PC-3 (cell line): ENCODE measurements at regions of chr2 and their contacts with region 1.

Region 1: DNA sequence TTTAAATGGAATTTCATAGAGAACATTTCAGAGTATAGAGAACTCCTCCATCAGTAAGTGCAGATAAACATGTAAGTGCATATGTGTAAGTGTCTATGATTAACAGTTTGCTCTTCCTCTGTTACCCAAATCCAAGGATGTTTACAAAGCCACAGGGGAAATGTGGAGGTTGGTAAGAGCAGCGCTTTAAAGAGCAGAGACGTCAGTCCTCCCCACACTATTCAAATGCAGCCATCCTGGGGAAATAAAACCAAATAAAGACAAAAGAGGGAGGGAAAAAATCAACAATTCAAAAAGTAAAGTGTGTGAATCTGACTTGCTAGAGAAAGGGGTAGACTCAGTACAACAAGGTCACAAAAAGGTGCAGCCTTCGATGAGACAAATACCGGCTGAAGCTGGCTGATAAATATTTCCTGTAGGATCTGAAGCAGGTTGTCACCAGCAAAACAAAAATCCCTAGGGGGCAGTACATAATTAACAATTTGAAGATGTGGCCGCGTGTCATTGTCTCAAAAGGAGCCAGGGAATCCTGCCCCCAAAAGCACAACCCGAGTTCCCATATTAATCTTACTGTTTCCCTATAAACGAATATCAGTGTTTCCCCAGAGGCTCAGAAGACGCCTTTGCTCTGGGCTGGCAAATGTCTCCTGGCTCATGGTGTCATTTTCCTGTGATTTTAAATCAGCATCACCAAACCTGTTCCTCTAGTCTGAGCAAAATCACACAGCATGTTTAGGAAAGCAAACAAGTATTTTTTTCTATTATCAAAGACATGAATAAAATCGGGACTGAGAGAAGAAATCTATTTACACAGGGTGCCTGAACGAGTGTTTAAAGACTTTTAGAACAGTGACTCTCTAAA is 216.6 kb downstream of the CDCA7 start:
- DNase-seq: peak; percentile 77
- ATAC-seq: peak; percentile 72
- H3K4me3 ChIP-seq: peak overlapping the region; percentile 58
- H3K27ac ChIP-seq: peak overlapping the region; percentile 71
- H3K4me1 ChIP-seq: peaks cover 40% of the 10 kb centered on the region
- H3K27me3 ChIP-seq: no peaks in the 10 kb centered on the region
- CTCF ChIP-seq: peak; percentile 70

Region 2: GRCh38 chr2:173448938-173449471 is 122.2 kb before region 1 on chr2:
- CTCF ChIA-PET with region 1: no interaction called
- POLR2A ChIA-PET with region 1: no interaction called
- intact Hi-C with region 1: loop called (anchors 2 kb)
- DNase-seq: peak; percentile 95
- ATAC-seq: peak; percentile 96
- H3K4me3 ChIP-seq: peak overlapping the region; percentile 60
- H3K27ac ChIP-seq: peak overlapping the region; percentile 35; the same call in 1 of the 2 replicates
- H3K4me1 ChIP-seq: peaks cover 11% of the 10 kb centered on the region; the same call in 1 of the 2 replicates
- H3K27me3 ChIP-seq: no peaks in the 10 kb centered on the region
- CTCF ChIP-seq: peak; percentile 86

Region 3: DNA sequence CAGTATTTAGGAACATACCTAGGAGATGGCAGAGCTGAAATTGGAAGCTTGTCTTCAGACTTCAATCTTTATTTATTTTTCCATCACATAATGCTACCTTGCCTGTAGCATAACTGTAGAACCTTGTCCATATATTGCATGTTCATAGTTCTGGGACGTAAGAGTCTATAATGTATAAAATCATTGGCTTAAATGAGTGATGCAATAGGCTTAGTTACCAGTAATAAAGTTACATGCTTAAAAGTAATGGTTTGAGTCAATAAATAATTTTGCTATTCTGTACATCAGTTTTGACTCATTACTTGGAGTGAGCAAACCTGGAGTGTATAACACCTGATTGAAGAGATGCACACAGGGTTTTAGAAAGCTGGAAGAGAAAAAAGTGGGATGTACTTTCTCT is 12.7 kb after region 1 on chr2:
- CTCF ChIA-PET with region 1: no interaction called
- POLR2A ChIA-PET with region 1: no interaction called
- intact Hi-C with region 1: no loop called
- DNase-seq: no peak
- ATAC-seq: no peak
- H3K4me3 ChIP-seq: no peak overlapping the region
- H3K27ac ChIP-seq: no peak overlapping the region
- H3K4me1 ChIP-seq: peaks cover 17% of the 10 kb centered on the region
- H3K27me3 ChIP-seq: no peaks in the 10 kb centered on the region
- CTCF ChIP-seq: no peak

Region 4: GRCh38 chr2:173652767-173653431 is 81.6 kb after region 1 on chr2:
- CTCF ChIA-PET with region 1: no interaction called
- POLR2A ChIA-PET with region 1: no interaction called
- intact Hi-C with region 1: loop called (anchors 1 kb)
- DNase-seq: peak; percentile 99
- ATAC-seq: peak; percentile 99
- H3K4me3 ChIP-seq: peak overlapping the region; percentile 50
- H3K27ac ChIP-seq: peak overlapping the region; percentile 97
- H3K4me1 ChIP-seq: peaks cover 27% of the 10 kb centered on the region
- H3K27me3 ChIP-seq: no peaks in the 10 kb centered on the region
- CTCF ChIP-seq: no peak

Region 5: DNA sequence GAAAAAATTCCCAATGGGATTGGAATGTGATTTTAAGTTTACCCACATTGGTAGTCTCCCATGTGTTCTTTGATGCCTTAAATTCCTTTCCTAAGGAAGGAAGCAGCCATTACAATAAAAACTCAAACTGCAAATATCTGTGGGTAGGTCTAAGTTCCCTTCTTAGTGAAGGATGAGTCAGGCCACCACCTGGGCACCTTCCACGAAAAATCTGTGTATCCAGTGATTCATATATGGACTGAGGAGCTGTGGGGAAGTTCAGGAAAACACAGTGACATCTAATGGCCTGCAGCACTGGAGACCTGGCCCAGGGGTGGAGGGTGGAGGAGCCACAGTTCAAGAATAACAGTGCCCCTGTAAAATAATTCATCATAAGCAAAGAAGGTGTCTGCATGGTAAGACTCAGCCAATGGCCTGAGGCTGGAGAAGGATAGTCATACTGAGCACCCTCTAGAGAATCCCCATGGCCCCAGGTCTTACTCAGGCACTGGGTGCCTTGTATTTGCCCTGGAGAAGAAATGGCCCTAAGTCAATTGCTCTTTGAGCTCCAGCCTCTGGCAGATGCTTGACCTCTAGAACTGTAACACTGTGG is 145.3 kb after region 1 on chr2:
- CTCF ChIA-PET with region 1: no interaction called
- POLR2A ChIA-PET with region 1: no interaction called
- intact Hi-C with region 1: loop called (anchors 1 kb)
- DNase-seq: peak; percentile 97
- ATAC-seq: peak; percentile 81
- H3K4me3 ChIP-seq: 0 out of 2 replicates have a peak overlapping the region, but pooled peaks have one; percentile 8
- H3K27ac ChIP-seq: peak overlapping the region; percentile 96
- H3K4me1 ChIP-seq: peaks cover 43% of the 10 kb centered on the region
- H3K27me3 ChIP-seq: no peaks in the 10 kb centered on the region
- CTCF ChIP-seq: peak; percentile 42

Region 6: GRCh38 chr2:173854840-173855239 is 283.6 kb after region 1 on chr2:
- CTCF ChIA-PET with region 1: no interaction called
- POLR2A ChIA-PET with region 1: no interaction called
- intact Hi-C with region 1: loop called (anchors 10 kb)
- DNase-seq: peak; percentile 91
- ATAC-seq: peak; percentile 86
- H3K4me3 ChIP-seq: peak overlapping the region; percentile 19; the same call in 1 of the 2 replicates
- H3K27ac ChIP-seq: peak overlapping the region; percentile 38
- H3K4me1 ChIP-seq: peaks cover 33% of the 10 kb centered on the region
- H3K27me3 ChIP-seq: no peaks in the 10 kb centered on the region
- CTCF ChIP-seq: no peak

Region 7: DNA sequence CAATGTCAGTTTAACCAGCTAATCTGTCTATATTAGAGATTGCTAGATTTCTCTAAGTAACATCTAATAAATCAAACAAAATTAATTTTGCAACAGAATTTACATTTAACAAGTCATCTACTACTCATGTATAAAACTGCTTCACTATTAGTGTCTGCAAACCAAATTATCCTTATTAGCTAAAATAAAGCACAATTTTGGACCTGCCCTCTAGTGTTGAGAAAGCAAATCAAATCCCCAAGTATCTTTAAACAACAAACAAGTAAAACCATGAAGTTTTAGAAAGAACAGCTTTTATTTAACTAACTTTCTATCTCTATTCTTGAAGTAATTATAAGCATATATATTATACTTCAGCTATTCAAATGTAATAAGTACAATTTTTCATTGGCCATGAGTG is 507.0 kb after region 1 on chr2:
- CTCF ChIA-PET with region 1: no interaction called
- POLR2A ChIA-PET with region 1: no interaction called
- intact Hi-C with region 1: loop called (anchors 5 kb)
- DNase-seq: peak; percentile 31
- ATAC-seq: no peak
- H3K4me3 ChIP-seq: no peak overlapping the region
- H3K27ac ChIP-seq: no peak overlapping the region
- H3K4me1 ChIP-seq: no peaks in the 10 kb centered on the region
- H3K27me3 ChIP-seq: no peaks in the 10 kb centered on the region
- CTCF ChIP-seq: peak; percentile 75